K562 (cell line): ENCODE measurements at regions of chr14 and their contacts with region 1.

Region 1: GRCh38 chr14:102096214-102097114 is 9.6 kb upstream of the HSP90AA1 start:
- DNase-seq: peak; percentile 48 to 86 (median 60)
- ATAC-seq: peak; percentile 81
- H3K4me3 ChIP-seq: no peak overlapping the region
- H3K27ac ChIP-seq: peak overlapping the region; percentile 70; the same call in 2 of the 3 replicates
- H3K4me1 ChIP-seq: peaks cover 27 to 31% of the 10 kb centered on the region in 2 experiments
- H3K27me3 ChIP-seq: no peaks in the 10 kb centered on the region
- CTCF ChIP-seq: peak; percentile 79 to 90 (median 87)
- EP300 ChIP-seq: no peak
- POLR2A ChIP-seq: no peak
- RAD21 ChIP-seq: peak; percentile 75 to 84

Region 2: GRCh38 chr14:102046343-102047278 is 49.9 kb before region 1 on chr14:
- CTCF ChIA-PET with region 1: interaction called, 18 read pairs
- POLR2A ChIA-PET with region 1: no interaction called
- in situ Hi-C with region 1: no loop called
- intact Hi-C with region 1: loop called (anchors 1 kb)
- DNase-seq: peak; percentile 74 to 83 (median 80)
- ATAC-seq: peak; percentile 100
- H3K4me3 ChIP-seq: no peak overlapping the region
- H3K27ac ChIP-seq: no peak overlapping the region
- H3K4me1 ChIP-seq: peaks cover 0 to 11% of the 10 kb centered on the region in 2 experiments; a peak in 2 of 5 replicates
- H3K27me3 ChIP-seq: no peaks in the 10 kb centered on the region
- CTCF ChIP-seq: peak; percentile 72 to 98 (median 95)
- EP300 ChIP-seq: no peak
- POLR2A ChIP-seq: no peak
- RAD21 ChIP-seq: peak; percentile 51 to 79